Activated CD4-positive, alpha-beta T cell treated with anti-CD3 and anti-CD28 coated beads, Interleukin-2, amount 10 ng/mL, durations not matched to agents 24 days and 14 days (primary cell): ENCODE measurements at regions of chr2 and their contacts with region 1.

Region 1: DNA sequence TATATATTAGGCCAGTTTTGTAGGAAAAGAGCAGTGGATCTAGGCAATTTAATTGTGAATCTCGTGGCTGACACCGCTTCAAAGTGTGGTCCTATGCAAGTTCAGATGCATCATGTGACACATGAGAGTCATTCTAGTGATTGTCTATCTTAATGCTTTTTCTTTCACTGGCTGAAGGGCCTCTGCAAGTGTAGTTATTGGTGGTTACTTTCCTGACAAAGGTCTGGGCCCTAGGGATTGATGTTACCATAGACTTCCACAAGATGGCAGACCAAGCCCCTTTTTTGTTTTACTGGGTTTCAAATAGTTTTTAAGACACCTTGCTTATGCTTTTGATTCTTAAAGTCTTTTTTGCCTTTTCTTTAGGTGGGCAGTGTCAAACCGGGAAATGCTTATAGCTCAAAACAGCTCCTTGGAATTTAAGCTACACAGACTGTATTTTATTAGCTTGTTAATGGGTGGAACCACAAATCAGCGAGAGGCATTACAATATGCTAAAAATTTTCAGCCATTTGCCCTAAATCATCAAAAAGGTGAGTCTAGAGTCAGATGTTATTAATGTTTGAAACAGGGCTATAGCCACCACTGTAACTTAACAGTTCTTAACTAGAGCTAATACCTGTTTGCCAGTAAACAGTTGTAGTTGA is 25.9 kb downstream of the CD8A start:
- DNase-seq: peak; percentile 81
- H3K4me3 Mint-ChIP-seq: no peak overlapping the region
- H3K27ac Mint-ChIP-seq: no peak overlapping the region
- H3K4me1 Mint-ChIP-seq: peaks cover 10% of the 10 kb centered on the region
- H3K27me3 Mint-ChIP-seq: no peaks in the 10 kb centered on the region

Region 2: DNA sequence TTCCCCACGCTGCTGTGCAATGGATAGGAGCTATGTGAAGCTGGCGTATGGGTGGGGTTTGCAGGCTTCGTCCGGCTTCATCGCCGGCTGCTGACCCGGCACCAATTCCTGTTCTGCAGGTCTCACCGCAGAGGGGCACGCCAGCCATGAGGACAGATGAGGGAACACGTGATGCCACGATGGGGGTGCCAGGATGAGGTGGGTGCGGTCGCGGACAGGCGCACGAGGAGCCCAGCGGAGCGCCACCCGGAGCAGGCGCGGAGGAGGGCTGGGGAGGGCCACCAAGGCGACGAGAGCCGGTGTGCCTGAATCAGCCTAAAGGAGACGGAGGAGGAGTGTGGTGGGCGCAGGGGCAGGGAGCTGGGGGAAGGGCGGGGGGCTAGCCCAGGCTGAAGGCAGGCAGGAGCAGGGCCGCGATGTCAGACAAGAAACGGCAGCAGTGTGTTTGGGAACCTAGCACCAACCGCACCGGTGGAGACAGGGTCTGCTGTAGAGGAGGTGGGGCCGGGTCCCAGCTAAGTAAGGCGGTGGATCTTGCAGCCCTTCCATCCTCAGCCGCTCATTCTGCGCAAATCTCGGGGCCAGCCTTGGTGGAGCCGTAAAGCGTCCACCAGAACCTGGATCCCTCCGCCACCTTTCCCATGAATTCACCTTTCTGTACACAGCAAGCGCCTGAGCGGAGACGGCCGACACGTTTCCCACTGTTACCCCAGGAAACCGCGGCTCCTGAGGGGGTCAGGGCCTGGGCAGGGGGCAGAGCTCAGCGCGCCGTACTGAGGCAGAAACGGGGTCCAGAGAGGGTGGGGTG is 42.9 kb after region 1 on chr2:
- intact Hi-C with region 1: loop called (anchors 2 kb)
- DNase-seq: peak; percentile 78
- H3K4me3 Mint-ChIP-seq: peak overlapping the region; percentile 87
- H3K27ac Mint-ChIP-seq: peak overlapping the region; percentile 31
- H3K4me1 Mint-ChIP-seq: peaks cover 24% of the 10 kb centered on the region
- H3K27me3 Mint-ChIP-seq: peaks cover 59% of the 10 kb centered on the region